ENCODE measurements at regions of chr1 and their contacts with region 1.

Region 1: GRCh38 chr1:21176586-21177555 is at the start of gene EIF4G3:
- DNase-seq: peak; percentile 99
- H3K4me3 ChIP-seq: peak within 1 kb of the TSS; percentile 83
- H3K27ac ChIP-seq: peak within 1 kb of the TSS; percentile 78
- H3K4me1 ChIP-seq: peaks cover 12% of the 10 kb centered on the region
- H3K27me3 ChIP-seq: no peaks in the 10 kb centered on the region
- CTCF ChIP-seq: no peak
- total RNA-seq, gene EIF4G3: 84.7 and 86.8 TPM in 2 replicates

Region 2: DNA sequence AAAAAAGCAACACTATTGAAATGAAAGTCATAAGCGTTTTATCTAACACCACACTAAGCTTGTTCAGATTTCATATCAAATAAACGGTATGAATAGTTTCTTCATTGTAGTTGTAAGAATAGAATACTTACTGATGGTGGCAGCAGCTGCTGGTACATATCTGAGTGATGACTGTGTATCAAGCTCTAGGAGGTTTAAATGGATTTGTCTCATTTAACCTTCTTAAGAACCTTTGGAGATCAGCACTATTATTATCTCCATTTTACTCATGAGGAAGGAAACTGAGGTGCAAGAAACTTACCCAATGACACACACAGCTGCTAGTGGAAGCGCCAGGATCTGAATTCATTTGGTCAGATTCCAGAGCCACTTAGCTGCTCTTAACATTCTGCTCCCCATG is 104.2 kb before region 1 on chr1:
- CTCF ChIA-PET with region 1: interaction called, 11 read pairs
- POLR2A ChIA-PET with region 1: no interaction called
- intact Hi-C with region 1: no loop called
- DNase-seq: peak; percentile 38
- H3K4me3 ChIP-seq: no peak overlapping the region
- H3K27ac ChIP-seq: no peak overlapping the region
- H3K4me1 ChIP-seq: peaks cover 17% of the 10 kb centered on the region
- H3K27me3 ChIP-seq: no peaks in the 10 kb centered on the region
- CTCF ChIP-seq: peak; percentile 23; the same call in 1 of the 2 replicates

Region 3: GRCh38 chr1:21200767-21201166 is 23.9 kb after region 1 on chr1:
- CTCF ChIA-PET with region 1: no interaction called
- POLR2A ChIA-PET with region 1: no interaction called
- intact Hi-C with region 1: no loop called
- DNase-seq: peak; percentile 39
- H3K4me3 ChIP-seq: no peak overlapping the region
- H3K27ac ChIP-seq: no peak overlapping the region
- H3K4me1 ChIP-seq: no peaks in the 10 kb centered on the region
- H3K27me3 ChIP-seq: no peaks in the 10 kb centered on the region
- CTCF ChIP-seq: no peak

Region 4: GRCh38 chr1:21355956-21356355 is 179.1 kb after region 1 on chr1:
- CTCF ChIA-PET with region 1: no interaction called
- POLR2A ChIA-PET with region 1: no interaction called
- intact Hi-C with region 1: no loop called
- DNase-seq: no peak
- H3K4me3 ChIP-seq: no peak overlapping the region
- H3K27ac ChIP-seq: no peak overlapping the region
- H3K4me1 ChIP-seq: no peaks in the 10 kb centered on the region
- H3K27me3 ChIP-seq: no peaks in the 10 kb centered on the region
- CTCF ChIP-seq: no peak